Heart right ventricle (tissue), 16 donors: ENCODE measurements at regions of chr13 and their contacts with region 1.

Region 1: GRCh38 chr13:36549755-36550154 is 117.5 kb downstream of the CCNA1 start:
- DNase-seq: peak in 1 of 2 donors; percentile 28
- ATAC-seq: peak in 4 of 8 donors; percentile 9 to 63 (median 32)
- H3K4me3 ChIP-seq: no peak overlapping the region
- H3K27ac ChIP-seq: no peak overlapping the region
- H3K4me1 ChIP-seq: peaks cover 0 to 9% (median 0%) of the 10 kb centered on the region in 9 donors
- H3K27me3 ChIP-seq: no peaks in the 10 kb centered on the region
- CTCF ChIP-seq: no peak

Region 2: GRCh38 chr13:36673838-36674326 is 124.1 kb after region 1 on chr13 and contains the start of gene SERTM1:
- intact Hi-C with region 1: loop called in 1 of 10 experiments (anchors 5 kb)
- DNase-seq: peak in 1 of 2 donors; percentile 49
- ATAC-seq: peak; percentile 47 to 96 (median 82)
- H3K4me3 ChIP-seq: peak within 1 kb of the TSS in 9 of 10 donors; percentile 28 to 50 (median 44)
- H3K27ac ChIP-seq: no peak within 1 kb of the TSS
- H3K4me1 ChIP-seq: peaks cover 0 to 8% (median 0%) of the 10 kb centered on the region in 9 donors
- H3K27me3 ChIP-seq: peaks cover 6 to 40% (median 35%) of the 10 kb centered on the region in 7 donors
- CTCF ChIP-seq: no peak
- total RNA-seq, gene SERTM1: 0.13 to 1.2 (median 0.41) TPM